OCI-LY7 (cell line): ENCODE measurements at regions of chr11 and their contacts with region 1.

Region 1: DNA sequence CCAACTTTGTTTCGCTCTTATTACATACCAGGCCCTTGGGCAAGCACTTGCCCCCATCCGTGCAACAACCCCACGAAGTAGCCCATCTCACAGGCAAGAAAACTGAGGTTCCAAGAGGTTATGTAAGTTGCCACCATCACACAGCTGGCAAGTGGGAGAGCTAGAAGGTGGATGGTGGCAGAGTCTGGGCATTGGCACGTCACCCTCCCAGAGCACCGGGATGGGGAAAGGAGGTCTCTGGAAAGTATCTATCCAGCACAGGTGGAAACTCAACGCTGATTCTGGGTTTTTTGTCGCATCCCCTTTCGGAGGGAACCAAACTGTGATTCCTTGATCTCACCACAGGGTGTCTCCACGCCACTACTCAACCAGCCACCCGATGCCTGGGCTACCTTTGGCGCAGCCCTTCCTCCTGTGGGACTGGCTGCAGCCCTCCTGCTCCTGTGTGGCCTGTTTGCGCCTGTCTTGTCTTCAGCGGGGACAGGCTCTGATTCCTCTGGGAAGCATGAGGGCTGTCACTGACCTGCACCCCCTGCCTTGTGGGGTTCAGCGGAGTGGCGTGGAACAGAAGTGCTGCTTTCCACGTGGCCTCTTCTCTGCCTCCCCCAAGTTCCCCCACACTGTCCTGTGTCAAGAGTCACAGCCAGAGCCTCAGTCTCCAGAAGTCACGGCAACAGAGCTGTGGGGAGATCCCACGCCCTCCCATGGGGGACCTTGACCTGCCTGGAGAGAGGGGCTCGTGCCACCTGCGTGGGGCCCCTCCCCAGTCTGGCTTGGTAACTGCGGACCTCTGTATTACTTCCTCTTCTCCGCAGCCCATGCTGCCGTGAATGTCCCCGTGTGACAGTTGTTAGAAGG is 34.4 kb upstream of the TRIM29 start:
- DNase-seq: peak; percentile 56
- H3K4me3 ChIP-seq: no peak overlapping the region
- H3K27ac ChIP-seq: no peak overlapping the region
- H3K4me1 ChIP-seq: no peaks in the 10 kb centered on the region
- CTCF ChIP-seq: peak; percentile 76

Region 2: DNA sequence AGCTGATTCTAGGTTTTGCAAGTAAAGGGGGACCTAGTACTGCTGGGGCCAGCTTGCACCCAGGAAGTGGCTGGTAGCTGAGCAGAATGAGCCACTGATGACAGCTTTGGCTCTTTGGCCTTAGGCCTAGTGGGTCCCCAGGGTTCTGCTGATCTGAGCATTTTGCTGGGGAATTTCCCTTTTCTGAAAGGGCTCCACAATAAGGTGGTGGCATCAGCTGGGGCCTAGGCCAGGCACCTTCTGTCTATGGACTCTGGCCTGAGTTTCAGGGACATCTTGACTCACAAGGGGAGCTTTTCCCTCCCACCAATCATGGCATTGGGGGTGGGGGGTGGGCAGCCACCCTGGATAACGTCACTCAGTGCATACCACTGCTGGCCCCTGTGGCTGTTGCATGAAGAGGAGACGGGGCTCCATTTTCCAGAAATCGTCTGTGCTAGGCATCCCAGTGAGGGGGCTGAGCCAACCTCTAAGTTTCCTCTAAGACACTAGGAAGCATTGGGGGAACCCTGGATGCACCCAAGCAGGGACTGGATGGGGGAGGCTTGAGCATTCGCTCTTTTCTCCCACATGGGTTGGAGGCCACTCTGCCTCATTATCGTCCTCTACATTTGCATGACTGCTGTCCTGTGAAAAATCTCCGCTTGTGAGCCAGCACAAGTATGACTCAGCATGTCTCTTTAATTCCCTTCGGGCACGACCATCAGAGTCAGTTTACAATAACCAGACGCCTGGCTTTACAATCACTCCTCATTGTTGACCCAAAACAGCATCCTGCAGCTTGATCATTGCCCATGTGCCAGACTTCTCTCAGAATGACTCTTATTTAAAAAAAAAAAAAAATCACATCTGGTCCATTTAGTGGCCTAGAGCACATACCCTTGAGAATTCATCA is 604.3 kb before region 1 on chr11:
- CTCF ChIA-PET with region 1: no interaction called
- POLR2A ChIA-PET with region 1: no interaction called
- intact Hi-C with region 1: no loop called
- DNase-seq: no peak
- H3K4me3 ChIP-seq: no peak overlapping the region
- H3K27ac ChIP-seq: no peak overlapping the region
- H3K4me1 ChIP-seq: no peaks in the 10 kb centered on the region
- CTCF ChIP-seq: no peak

Region 3: DNA sequence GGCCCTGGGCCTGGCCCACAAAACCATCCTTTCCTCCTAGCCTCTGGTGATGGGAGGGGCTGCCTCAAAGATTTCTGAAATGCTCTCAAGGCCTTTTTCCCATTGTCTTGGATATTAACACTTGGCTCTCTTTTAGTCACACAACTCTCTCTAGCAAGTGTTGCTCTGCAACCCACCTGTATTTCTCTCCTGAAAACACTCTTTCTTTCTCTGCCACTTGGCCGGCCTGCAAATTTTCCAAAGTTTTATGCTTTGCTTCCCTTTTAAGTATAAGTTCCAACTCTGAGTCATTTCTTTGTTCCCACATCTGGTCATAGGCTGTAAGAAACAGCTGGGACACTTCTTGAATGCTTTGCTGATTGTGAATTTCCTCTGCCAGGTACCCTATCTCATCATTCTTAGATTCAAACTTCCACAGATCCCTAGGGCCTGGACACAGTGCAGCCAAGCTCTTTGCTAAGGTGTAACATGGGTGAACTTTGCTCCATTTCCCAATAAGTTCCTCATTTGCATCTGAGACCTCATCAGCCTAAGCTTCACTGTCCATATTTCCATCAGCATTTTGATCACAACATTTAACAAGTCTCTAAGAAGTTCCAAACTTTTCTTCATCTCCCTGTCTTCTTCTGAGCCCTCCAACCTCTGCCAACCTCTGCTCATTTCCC is 128.1 kb before region 1 on chr11:
- CTCF ChIA-PET with region 1: interaction called, 13 read pairs
- POLR2A ChIA-PET with region 1: no interaction called
- intact Hi-C with region 1: no loop called
- DNase-seq: no peak
- H3K4me3 ChIP-seq: no peak overlapping the region
- H3K27ac ChIP-seq: no peak overlapping the region
- H3K4me1 ChIP-seq: no peaks in the 10 kb centered on the region
- CTCF ChIP-seq: no peak

Region 4: DNA sequence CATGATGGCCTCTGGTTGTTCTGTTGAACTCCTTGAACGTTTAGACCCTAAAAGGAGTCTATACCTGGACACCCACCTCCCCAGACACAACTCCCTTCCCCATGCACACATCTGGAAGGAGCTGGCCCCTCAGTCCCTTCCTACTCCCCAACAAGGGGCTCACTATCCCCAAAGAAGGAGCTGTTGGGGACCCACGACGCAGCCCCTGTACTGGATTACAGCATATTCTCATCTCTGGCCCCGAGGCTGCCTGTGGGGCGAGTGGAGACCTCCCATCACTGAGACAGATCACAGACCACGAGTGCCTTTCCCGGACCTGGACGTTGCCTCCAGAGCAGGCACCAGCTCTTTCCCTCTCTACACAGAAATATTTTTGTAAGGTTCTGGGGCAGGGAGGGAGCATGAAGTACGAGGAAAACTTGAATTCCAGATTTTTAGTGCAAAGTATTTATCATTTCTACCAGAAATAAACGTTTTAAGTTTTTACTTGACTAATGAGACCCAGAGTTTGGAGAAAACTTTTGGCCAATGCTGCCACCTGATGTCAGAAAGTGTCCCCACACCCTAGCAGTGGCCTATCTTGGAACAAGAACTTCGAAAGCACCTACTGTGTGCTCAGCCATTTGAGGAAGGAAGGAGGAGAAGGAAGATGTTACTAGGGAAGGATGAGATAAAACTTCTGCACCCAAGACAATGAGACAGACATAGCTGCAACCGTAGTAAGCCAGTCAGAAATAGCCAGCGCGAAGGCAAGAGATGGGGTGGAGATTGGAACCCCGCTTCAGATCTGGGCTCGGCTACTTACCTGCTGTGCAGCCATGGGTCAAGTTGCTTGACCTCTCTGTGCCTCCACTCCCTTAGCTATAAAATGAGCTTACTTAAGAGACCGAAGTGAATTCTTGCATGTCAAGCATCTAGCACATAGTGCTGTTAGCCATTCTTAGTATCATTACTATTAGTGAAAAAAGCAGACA is 57.5 kb after region 1 on chr11:
- CTCF ChIA-PET with region 1: no interaction called
- POLR2A ChIA-PET with region 1: no interaction called
- intact Hi-C with region 1: loop called (anchors 1 kb)
- DNase-seq: peak; percentile 25
- H3K4me3 ChIP-seq: no peak overlapping the region
- H3K27ac ChIP-seq: no peak overlapping the region
- H3K4me1 ChIP-seq: peaks cover 8% of the 10 kb centered on the region
- CTCF ChIP-seq: peak; percentile 77

Region 5: DNA sequence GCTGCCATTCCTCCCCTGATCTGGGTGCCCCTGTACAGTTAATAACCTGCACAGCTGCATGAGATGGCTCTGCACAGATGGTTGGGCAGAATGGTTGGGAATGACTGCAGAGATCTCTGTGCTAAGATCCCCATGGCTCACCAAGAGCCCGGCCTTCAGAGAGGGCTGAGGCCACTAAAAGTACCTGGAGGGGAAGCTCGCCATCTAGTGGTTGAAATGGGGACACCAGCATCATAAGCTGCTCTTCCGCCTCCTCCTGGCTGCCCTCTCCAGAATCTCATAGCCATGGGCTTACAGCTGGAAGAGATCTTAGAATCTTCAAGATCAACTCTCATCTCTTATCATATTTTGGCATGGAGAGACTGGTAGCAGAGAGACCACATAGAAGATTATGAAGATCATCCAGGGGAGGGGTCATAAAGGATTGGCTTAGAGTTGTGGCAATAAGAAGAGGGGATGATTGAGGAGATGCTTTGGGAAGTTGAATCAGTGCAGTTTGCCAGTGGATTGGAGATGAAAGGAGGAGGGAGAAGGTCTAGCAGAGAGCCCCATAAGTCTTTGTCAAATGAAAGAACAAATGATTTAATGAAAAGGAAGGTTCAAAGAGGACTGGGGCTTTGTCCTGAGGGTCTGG is 130.8 kb after region 1 on chr11:
- CTCF ChIA-PET with region 1: no interaction called
- POLR2A ChIA-PET with region 1: no interaction called
- intact Hi-C with region 1: loop called (anchors 1 kb)
- DNase-seq: peak; percentile 71
- H3K4me3 ChIP-seq: no peak overlapping the region
- H3K27ac ChIP-seq: no peak overlapping the region
- H3K4me1 ChIP-seq: no peaks in the 10 kb centered on the region
- CTCF ChIP-seq: peak; percentile 96

Region 6: DNA sequence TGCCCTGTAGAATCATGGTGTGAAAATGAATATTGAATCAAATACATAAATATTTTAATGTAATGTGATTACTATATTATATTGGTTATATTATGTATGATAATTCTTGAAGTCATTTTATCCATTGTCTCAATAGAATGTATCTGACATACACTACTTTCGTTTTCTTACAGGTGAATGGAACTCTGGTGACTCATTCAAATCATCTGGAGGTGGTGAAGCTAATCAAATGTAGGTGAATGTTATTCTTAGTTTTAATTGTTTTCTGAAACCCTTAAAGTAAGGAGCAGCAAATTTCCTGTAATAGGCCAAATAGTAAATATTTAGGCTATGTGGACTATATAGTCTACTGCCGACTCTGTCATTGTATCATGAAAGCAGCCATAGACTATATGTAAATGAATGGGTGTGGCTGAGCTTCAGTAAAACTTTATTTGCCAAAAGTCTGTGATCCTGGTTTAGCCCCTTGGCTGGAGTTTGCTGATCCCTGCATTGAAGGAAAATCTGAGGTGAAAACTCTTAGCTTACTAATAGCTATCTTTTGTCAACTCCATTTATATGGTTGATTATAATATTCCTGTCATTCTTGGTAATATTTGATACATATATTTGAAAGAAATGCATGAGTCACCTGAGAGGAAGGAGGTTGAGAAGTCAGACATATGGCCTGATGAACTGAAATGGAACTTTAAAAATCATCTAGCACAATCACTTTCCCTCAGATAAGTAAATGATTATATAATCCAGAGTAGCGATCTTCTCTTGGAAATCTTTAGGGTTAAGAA is 252.1 kb after region 1 on chr11:
- CTCF ChIA-PET with region 1: no interaction called
- POLR2A ChIA-PET with region 1: no interaction called
- intact Hi-C with region 1: no loop called
- DNase-seq: no peak
- H3K4me3 ChIP-seq: no peak overlapping the region
- H3K27ac ChIP-seq: no peak overlapping the region
- H3K4me1 ChIP-seq: peaks cover 16% of the 10 kb centered on the region
- CTCF ChIP-seq: no peak